ENCODE measurements at regions of chr3 and their contacts with region 1.

Region 1: DNA sequence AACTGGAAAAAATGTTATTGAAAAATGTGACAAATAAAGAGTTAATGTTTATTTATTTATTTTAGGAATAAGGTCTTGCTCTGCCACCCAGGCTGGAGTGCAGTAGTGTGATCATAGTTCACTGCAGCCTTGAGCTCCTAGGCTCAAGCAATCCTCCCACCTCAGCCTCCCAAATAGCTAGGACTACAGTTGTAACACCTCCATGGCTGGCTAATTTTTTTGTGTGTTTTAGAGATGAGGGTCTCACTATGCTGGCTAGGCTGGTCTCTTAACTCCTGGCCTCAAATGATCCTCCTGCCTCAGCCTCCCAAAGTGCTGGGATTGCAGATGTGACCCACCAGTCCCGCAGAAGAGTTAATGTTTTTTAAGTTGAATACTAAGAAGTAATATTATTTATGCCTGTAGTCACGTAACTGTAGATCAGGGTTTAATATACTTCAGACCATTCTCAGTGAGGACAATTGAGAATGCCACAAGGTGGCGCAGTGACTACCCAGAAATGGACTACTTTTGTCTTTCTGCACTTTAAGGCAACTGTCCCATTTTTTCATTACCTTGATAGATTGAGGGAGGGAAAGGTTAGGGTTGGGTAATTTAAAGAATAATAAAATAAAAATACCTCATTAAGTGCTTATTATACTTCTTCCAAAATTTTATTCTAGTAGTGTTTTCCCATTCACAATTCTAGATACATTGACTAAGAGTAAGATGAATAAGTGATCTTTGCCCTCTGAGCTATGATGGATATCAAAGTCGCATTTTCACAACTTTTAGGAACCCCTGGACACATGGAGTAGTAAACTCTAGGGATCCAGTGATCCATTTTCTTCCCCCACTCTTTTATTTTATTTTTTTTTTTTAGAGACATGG is 6.0 kb downstream of the MUC13 start:
- DNase-seq: no peak
- H3K4me3 ChIP-seq: no peak overlapping the region
- H3K27ac ChIP-seq: no peak overlapping the region
- H3K4me1 ChIP-seq: peaks cover 0 to 13% (median 2%) of the 10 kb centered on the region in 4 donors
- H3K27me3 ChIP-seq: no peaks in the 10 kb centered on the region
- CTCF ChIP-seq: peak; percentile 69 to 74 (median 71)
- EP300 ChIP-seq: no peak
- POLR2A ChIP-seq: no peak

Region 2: GRCh38 chr3:124976383-124976782 is 47.8 kb after region 1 on chr3:
- intact Hi-C with region 1: no loop called
- DNase-seq: no peak
- H3K4me3 ChIP-seq: no peak overlapping the region
- H3K27ac ChIP-seq: no peak overlapping the region
- H3K4me1 ChIP-seq: peaks cover 0 to 16% (median 1%) of the 10 kb centered on the region in 4 donors
- H3K27me3 ChIP-seq: no peaks in the 10 kb centered on the region
- CTCF ChIP-seq: no peak
- EP300 ChIP-seq: no peak
- POLR2A ChIP-seq: no peak

Region 3: DNA sequence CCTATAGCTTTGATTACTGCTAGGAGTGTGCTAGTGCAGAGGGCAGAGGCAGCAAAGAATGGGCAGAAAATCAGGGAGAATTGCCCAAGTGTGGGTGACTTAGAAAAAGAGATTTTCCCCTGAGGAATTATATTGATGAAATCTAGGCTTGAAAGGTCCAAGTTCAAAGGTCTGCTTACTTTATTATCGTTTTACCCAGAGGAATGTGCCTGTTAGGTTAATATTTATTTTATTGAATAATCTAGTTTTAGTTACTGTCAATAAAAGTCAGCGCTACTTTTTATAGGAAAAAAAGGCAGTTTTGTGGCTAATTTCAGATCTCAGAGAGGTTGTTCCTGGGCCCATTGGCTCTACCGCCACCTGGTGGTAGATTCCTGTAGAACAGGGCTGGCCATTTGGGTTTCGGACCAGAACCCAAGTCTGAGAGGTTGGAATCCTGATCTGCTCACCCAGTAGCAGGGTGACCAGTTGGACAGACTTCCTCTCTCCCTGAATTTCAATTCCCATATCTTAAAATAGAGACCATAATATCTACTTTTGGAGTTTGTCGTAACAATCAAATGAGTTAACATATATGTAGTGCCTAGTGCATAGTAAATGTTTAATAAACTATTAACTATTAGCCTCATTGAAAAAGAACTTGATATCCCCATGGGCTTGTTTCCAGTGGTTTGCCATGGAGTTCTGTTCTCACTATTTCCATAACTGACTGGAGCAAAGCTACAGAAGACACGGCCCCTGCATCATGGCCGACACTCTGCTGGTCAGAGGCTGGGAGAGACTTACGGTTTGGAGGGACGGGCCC is 509.3 kb after region 1 on chr3:
- intact Hi-C with region 1: loop called (anchors 5 kb)
- DNase-seq: peak; percentile 91
- H3K4me3 ChIP-seq: no peak overlapping the region
- H3K27ac ChIP-seq: no peak overlapping the region
- H3K4me1 ChIP-seq: peaks cover 0 to 3% (median 0%) of the 10 kb centered on the region in 4 donors
- H3K27me3 ChIP-seq: no peaks in the 10 kb centered on the region
- CTCF ChIP-seq: peak in 2 of 3 experiments; percentile 92 to 95
- EP300 ChIP-seq: no peak
- POLR2A ChIP-seq: no peak

Region 4: GRCh38 chr3:125585595-125586223 is 657.1 kb after region 1 on chr3:
- intact Hi-C with region 1: loop called (anchors 10 kb)
- DNase-seq: no peak
- H3K4me3 ChIP-seq: no peak overlapping the region
- H3K27ac ChIP-seq: no peak overlapping the region
- H3K4me1 ChIP-seq: peaks cover 5 to 38% (median 26%) of the 10 kb centered on the region in 4 donors
- H3K27me3 ChIP-seq: no peaks in the 10 kb centered on the region
- CTCF ChIP-seq: peak; percentile 86 to 89 (median 87)
- EP300 ChIP-seq: no peak
- POLR2A ChIP-seq: no peak

Region 5: DNA sequence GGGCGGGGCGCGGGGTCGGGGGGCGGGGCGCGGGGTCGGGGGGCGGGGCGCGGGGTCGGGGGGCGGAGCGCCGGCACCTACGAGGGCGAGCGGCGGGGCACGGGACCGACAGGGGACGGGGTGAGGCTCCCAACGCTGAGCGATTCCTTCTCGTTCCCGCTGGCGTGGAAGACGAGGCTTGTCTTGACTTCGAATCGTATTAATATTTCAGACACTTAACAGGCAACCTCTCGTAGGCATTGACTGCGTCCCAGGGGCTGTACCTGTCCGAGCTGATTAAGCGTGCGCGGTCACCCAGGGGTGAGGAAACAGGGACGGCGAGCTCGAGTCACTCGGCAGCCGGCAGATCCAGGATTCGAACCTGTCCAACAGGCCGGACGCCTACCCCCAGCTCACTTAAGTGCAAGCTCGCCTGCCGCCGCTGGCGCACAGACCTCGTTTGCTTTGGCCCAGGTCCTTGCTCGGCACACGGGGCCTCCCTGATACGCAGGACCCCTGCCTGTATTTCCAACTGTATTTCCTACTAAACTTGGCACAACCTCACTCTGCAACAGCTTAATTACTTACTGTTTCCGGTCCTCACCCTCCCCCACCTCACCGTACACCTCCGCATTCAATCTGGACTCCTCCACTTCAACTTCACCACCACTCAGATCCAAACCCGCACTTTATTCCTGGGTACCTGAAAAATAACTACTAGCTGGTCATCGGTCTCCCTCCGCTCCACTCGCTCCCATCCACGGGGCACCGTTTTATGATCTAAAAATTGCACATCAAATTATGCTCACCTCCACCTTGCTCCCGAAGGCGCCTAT is 1547.8 kb after region 1 on chr3:
- intact Hi-C with region 1: no loop called
- DNase-seq: no peak
- H3K4me3 ChIP-seq: peak overlapping the region; percentile 67 to 79 (median 71)
- H3K27ac ChIP-seq: peak overlapping the region; percentile 89 to 94 (median 92)
- H3K4me1 ChIP-seq: peaks cover 39 to 45% (median 45%) of the 10 kb centered on the region in 4 donors
- H3K27me3 ChIP-seq: no peaks in the 10 kb centered on the region
- CTCF ChIP-seq: no peak
- EP300 ChIP-seq: no peak
- POLR2A ChIP-seq: peak; percentile 54

Measured in esophagus muscularis mucosa (tissue), 4 donors.